Aorta (tissue), 5 donors: ENCODE measurements at regions of chr14 and their contacts with region 1.

Region 1: DNA sequence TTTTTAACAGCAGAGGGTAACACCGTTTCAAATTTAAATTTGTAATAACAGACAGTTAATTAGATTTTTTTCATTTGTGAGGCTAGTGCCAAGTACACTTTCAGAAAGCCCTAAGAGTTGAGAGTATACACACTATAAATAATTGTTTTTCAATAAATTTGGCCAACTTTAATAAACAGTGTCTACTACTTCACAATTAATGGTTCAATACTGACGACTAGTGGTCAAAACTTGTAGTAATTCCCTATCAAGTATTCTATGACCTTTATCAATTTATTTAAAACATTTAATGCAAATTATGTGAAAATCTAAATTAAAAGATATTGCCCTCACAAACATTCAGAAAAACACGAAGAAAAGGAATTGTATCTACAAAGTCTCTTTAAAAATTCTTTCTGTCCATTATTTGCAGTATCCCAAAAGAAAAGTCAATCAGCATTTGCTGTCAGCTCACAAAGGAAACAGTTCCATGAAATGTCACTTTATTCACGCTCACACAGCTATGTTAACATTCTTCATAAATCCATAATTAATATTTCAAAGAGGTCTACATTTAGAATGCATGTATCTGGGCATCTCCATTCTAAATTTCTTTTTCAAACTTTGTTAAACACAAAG is 91.2 kb downstream of the CEP128 start:
- DNase-seq: no peak
- ATAC-seq: no peak
- H3K4me3 ChIP-seq: no peak overlapping the region
- H3K27ac ChIP-seq: no peak overlapping the region
- H3K4me1 ChIP-seq: no peaks in the 10 kb centered on the region
- H3K27me3 ChIP-seq: no peaks in the 10 kb centered on the region

Region 2: GRCh38 chr14:78933948-78934524 is 1916.3 kb before region 1 on chr14:
- intact Hi-C with region 1: loop called in 1 of 2 experiments (anchors 10 kb)
- DNase-seq: no peak
- ATAC-seq: no peak
- H3K4me3 ChIP-seq: no peak overlapping the region
- H3K27ac ChIP-seq: no peak overlapping the region
- H3K4me1 ChIP-seq: no peaks in the 10 kb centered on the region
- H3K27me3 ChIP-seq: peaks cover 0 to 1% of the 10 kb centered on the region in 2 donors

Region 3: DNA sequence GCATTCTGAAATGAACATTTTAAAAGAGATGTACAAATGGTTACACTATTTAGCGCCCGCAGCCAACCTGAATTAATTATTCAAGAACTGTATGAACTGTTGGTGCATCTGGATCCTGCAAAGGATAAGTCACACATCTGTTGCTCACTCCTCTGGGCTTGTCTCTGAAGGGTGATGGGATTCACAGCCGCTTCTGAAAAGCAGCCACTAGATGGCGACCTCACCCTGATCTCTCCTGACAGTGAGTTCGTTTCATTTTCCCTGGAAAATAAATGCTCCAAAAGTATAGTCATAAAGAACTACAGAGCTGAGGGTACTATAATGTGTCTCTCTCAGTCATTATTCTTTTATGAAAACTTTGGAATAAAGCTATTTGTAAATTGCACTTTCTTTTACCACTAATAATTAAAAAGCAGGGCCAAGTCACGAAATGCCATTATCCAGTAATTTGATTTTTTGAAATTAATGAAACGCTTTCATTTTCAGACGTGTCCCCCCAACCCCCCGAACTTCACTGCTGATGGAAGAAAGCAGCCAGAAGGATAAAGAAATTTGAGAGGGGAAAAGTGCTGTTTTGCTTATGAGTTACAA is 1890.5 kb before region 1 on chr14:
- intact Hi-C with region 1: loop called in 1 of 2 experiments (anchors 10 kb)
- DNase-seq: peak; percentile 73 to 87
- ATAC-seq: peak; percentile 88
- H3K4me3 ChIP-seq: peak overlapping the region; percentile 49 to 51
- H3K27ac ChIP-seq: no peak overlapping the region
- H3K4me1 ChIP-seq: no peaks in the 10 kb centered on the region
- H3K27me3 ChIP-seq: no peaks in the 10 kb centered on the region

Region 4: DNA sequence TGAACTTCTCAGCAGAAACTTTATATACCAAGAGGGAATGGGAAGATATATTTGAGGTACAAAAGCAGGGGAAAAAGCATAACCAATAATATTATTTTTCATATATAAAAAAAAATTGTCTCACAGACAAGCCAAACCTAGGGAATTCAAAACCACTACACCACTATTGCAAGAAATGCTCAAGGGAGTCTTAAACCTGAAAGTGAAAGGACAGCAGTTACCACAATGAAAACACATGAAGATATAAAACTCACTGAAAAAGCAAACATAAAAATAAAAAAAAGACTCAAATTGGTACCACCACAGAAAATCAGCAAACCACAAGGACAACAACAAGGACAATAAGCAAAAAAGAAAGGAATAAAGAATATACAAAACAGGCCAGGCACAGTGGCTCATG is 40.6 kb before region 1 on chr14:
- intact Hi-C with region 1: no loop called
- DNase-seq: no peak
- ATAC-seq: no peak
- H3K4me3 ChIP-seq: no peak overlapping the region
- H3K27ac ChIP-seq: no peak overlapping the region
- H3K4me1 ChIP-seq: no peaks in the 10 kb centered on the region
- H3K27me3 ChIP-seq: no peaks in the 10 kb centered on the region